Activated T-helper 1 cell treated with anti-CD3 and anti-CD28 coated beads, Interleukin-12 subunit alpha, Interleukin-12 subunit beta, Interleukin-2, Interleukin-4 antibody, amounts not matched to agents 30 ng/mL and 10 ng/mL and 1 ng/mL, durations not matched to agents 14 hours and 24 hours and 36 hours (primary cell): ENCODE measurements at regions of chr17 and their contacts with region 1.

Region 1: GRCh38 chr17:68205251-68205807 is 42.5 kb upstream of the AMZ2 start:
- DNase-seq: peak; percentile 90
- H3K4me3 Mint-ChIP-seq: peak overlapping the region; percentile 90
- H3K27ac Mint-ChIP-seq: peak overlapping the region; percentile 75
- H3K4me1 Mint-ChIP-seq: peaks cover 33% of the 10 kb centered on the region
- H3K27me3 Mint-ChIP-seq: peaks cover 12% of the 10 kb centered on the region

Region 2: GRCh38 chr17:67993596-67994361 is 211.6 kb before region 1 on chr17:
- intact Hi-C with region 1: loop called (anchors 10 kb)
- DNase-seq: peak; percentile 68
- H3K4me3 Mint-ChIP-seq: peak overlapping the region; percentile 85
- H3K27ac Mint-ChIP-seq: peak overlapping the region; percentile 84
- H3K4me1 Mint-ChIP-seq: peaks cover 30% of the 10 kb centered on the region
- H3K27me3 Mint-ChIP-seq: peaks cover 26% of the 10 kb centered on the region

Region 3: GRCh38 chr17:68179926-68180285 is 25.4 kb before region 1 on chr17:
- intact Hi-C with region 1: loop called (anchors 1 kb)
- DNase-seq: no peak
- H3K4me3 Mint-ChIP-seq: no peak overlapping the region
- H3K27ac Mint-ChIP-seq: no peak overlapping the region
- H3K4me1 Mint-ChIP-seq: peaks cover 51% of the 10 kb centered on the region
- H3K27me3 Mint-ChIP-seq: peaks cover 7% of the 10 kb centered on the region

Region 4: GRCh38 chr17:68238164-68238872 is 33.0 kb after region 1 on chr17:
- intact Hi-C with region 1: loop called (anchors 1 kb)
- DNase-seq: no peak
- H3K4me3 Mint-ChIP-seq: peak overlapping the region; percentile 82
- H3K27ac Mint-ChIP-seq: peak overlapping the region; percentile 95
- H3K4me1 Mint-ChIP-seq: peaks cover 53% of the 10 kb centered on the region
- H3K27me3 Mint-ChIP-seq: no peaks in the 10 kb centered on the region

Region 5: DNA sequence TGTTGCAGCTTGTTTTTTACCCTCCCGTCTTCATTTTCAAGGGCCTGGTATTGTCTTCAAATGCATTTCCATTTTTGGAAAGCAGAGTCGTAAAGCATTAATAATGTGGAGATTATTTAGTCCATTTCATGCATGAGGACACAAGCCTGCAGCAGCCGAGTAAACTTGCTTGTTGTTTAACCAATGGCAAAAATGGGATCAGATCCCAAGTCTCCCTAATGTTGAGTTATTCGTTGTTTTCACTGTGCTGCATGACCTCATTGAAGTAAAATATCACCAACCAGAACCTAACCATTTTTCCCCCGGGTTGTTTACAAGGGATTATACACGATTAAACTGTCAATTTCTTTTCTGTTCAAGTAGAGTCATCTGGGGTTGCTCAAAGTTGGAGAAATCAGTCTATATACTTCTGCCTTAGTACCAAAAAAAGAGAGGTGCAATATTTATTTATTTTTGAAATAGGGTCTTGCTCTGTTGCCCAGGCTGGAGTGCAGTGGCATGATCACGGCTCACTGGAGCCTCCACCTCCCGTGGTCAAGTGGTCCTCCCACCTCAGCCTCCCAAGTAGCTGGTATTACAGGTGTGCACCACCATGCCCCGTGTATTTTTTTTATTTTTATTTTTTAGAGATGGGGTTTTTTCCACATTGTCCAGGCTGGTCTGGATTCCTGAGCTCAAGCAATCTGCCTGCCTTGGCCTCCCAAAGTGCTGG is 54.9 kb after region 1 on chr17:
- intact Hi-C with region 1: loop called (anchors 2 kb)
- DNase-seq: no peak
- H3K4me3 Mint-ChIP-seq: peak overlapping the region; percentile 80
- H3K27ac Mint-ChIP-seq: no peak overlapping the region
- H3K4me1 Mint-ChIP-seq: peaks cover 58% of the 10 kb centered on the region
- H3K27me3 Mint-ChIP-seq: no peaks in the 10 kb centered on the region

Region 6: GRCh38 chr17:68356520-68356919 is 151.2 kb after region 1 on chr17:
- intact Hi-C with region 1: loop called (anchors 1 kb)
- DNase-seq: peak; percentile 75
- H3K4me3 Mint-ChIP-seq: peak overlapping the region; percentile 73
- H3K27ac Mint-ChIP-seq: peak overlapping the region; percentile 86
- H3K4me1 Mint-ChIP-seq: peaks cover 61% of the 10 kb centered on the region
- H3K27me3 Mint-ChIP-seq: no peaks in the 10 kb centered on the region

Region 7: DNA sequence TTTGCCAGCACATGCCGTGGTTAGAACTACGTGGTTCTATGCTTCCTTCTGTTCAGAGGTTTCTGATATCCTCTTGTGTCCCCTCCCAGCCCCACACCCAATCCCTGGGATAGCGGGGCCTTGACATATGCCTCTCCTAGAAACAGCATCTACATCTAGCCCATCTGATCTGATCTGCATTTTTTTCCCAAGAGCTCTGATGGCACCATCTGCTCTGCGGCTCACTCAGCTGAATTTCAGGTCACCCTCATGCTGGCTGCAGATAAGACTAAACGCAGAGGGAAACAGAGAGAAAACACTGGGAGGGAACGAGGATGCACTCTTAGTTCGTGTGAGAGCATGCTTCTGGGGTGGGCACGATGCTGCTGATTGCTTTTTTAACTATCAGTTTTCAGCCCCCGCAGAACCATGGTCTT is 241.3 kb after region 1 on chr17:
- intact Hi-C with region 1: no loop called
- DNase-seq: no peak
- H3K4me3 Mint-ChIP-seq: no peak overlapping the region
- H3K27ac Mint-ChIP-seq: no peak overlapping the region
- H3K4me1 Mint-ChIP-seq: peaks cover 2% of the 10 kb centered on the region
- H3K27me3 Mint-ChIP-seq: peaks cover 2% of the 10 kb centered on the region